ENCODE measurements at regions of chr7 and their contacts with region 1.

Region 1: GRCh38 chr7:139645572-139646523 is 122.4 kb downstream of the CLEC2L start:
- DNase-seq: peak; percentile 93
- H3K4me3 Mint-ChIP-seq: no peak overlapping the region
- H3K27ac Mint-ChIP-seq: no peak overlapping the region
- H3K4me1 Mint-ChIP-seq: peaks cover 69% of the 10 kb centered on the region
- H3K27me3 Mint-ChIP-seq: no peaks in the 10 kb centered on the region

Region 2: GRCh38 chr7:139626817-139627216 is 19.0 kb before region 1 on chr7:
- CTCF ChIA-PET with region 1: interaction called, 53 read pairs
- intact Hi-C with region 1: no loop called
- DNase-seq: peak; percentile 56
- H3K4me3 Mint-ChIP-seq: no peak overlapping the region
- H3K27ac Mint-ChIP-seq: peak overlapping the region; percentile 68
- H3K4me1 Mint-ChIP-seq: peaks cover 74% of the 10 kb centered on the region
- H3K27me3 Mint-ChIP-seq: no peaks in the 10 kb centered on the region

Region 3: GRCh38 chr7:139680676-139681462 is 35.0 kb after region 1 on chr7:
- CTCF ChIA-PET with region 1: interaction called, 8 read pairs
- intact Hi-C with region 1: loop called (anchors 1 kb)
- DNase-seq: peak; percentile 91
- H3K4me3 Mint-ChIP-seq: no peak overlapping the region
- H3K27ac Mint-ChIP-seq: peak overlapping the region; percentile 88
- H3K4me1 Mint-ChIP-seq: peaks cover 45% of the 10 kb centered on the region
- H3K27me3 Mint-ChIP-seq: no peaks in the 10 kb centered on the region

Region 4: GRCh38 chr7:139767561-139767982 is 121.7 kb after region 1 on chr7:
- CTCF ChIA-PET with region 1: interaction called, 9 read pairs
- intact Hi-C with region 1: loop called (anchors 2 kb)
- DNase-seq: peak; percentile 38
- H3K4me3 Mint-ChIP-seq: no peak overlapping the region
- H3K27ac Mint-ChIP-seq: peak overlapping the region; percentile 73
- H3K4me1 Mint-ChIP-seq: peaks cover 76% of the 10 kb centered on the region
- H3K27me3 Mint-ChIP-seq: no peaks in the 10 kb centered on the region

Region 5: DNA sequence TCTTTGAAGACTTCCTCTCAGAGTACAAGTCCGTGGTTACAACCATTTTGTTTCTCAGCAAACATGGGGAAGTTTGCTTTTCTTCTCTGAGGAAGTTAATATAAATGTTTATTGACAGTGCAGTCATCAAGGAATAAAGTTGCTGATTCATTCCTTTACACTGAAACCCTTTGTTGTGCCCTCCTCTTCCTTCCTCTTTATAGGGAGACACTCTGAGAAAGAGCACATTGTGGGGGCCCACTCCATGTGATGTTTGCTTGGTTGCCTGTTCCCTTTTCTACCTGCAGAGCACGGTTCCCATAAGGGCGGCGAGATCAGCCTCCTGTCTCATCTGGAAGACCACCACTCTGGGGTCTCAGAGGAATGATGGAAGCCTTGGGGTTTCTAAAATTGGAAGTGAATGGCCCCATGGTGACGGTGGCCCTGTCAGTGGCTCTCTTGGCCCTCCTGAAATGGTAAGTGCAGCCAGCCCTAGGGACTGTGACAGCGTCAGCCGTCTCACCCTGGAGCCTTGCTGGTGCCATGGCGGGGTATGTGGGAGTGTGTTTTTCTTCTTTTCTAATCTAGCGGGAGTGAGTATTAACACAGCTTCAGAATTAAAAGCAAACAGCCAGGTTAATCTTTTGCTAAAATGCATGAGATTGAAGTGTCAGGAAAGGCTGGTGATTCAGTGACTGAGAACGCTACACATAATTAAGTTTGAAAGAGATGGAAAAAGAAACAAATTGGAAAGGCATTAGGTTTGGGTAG is 183.4 kb after region 1 on chr7 and contains the start of gene TBXAS1:
- CTCF ChIA-PET with region 1: interaction called, 16 read pairs
- intact Hi-C with region 1: loop called (anchors 1 kb)
- DNase-seq: peak; percentile 14
- H3K4me3 Mint-ChIP-seq: peak within 1 kb of the TSS; percentile 50
- H3K27ac Mint-ChIP-seq: peak within 1 kb of the TSS; percentile 77
- H3K4me1 Mint-ChIP-seq: peaks cover 24% of the 10 kb centered on the region
- H3K27me3 Mint-ChIP-seq: peaks cover 4% of the 10 kb centered on the region
- total RNA-seq, gene TBXAS1: 0.83 to 1.1 TPM

Region 6: DNA sequence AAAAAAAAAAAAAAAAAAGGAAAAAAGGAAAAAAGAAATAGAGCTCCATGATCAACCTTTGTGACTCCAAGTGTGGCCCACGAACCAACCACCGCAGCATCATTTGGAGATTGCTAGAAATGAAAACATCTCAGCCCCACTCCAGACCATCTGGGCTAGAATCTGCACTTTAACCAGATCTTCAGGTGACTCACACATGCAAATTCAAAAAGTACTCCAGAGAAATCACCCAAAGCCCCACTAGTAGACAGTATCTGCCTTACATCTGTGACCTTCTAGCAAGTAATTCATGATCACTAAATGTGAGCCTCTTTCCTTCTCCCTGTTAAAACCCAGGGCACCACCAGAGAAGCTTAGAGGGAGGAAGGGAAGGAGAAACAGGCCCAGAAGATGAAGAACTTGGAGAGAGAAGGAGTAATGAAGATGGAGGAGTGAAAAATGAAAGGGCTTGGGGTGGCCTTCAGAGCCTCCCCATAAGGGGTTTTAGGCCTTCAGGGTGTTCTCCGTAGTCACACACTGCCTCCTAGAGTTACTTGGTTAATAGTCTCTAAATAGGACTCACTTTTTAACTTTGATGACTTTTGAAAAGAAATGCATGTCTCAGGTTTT is 658.4 kb after region 1 on chr7:
- CTCF ChIA-PET with region 1: interaction called, 3 read pairs
- intact Hi-C with region 1: loop called (anchors 5 kb)
- DNase-seq: peak; percentile 55
- H3K4me3 Mint-ChIP-seq: no peak overlapping the region
- H3K27ac Mint-ChIP-seq: peak overlapping the region; percentile 90
- H3K4me1 Mint-ChIP-seq: peaks cover 7% of the 10 kb centered on the region
- H3K27me3 Mint-ChIP-seq: no peaks in the 10 kb centered on the region

Measured in activated naive CD4-positive, alpha-beta T cell treated with anti-CD3 and anti-CD28 coated beads for 36 hours (primary cell).